Heart left ventricle (tissue), 16 donors: ENCODE measurements at regions of chr2 and their contacts with region 1.

Region 1: GRCh38 chr2:219294356-219295351 is 14.5 kb downstream of the PTPRN start:
- DNase-seq: peak; percentile 83 to 93 (median 89)
- ATAC-seq: peak; percentile 48 to 92 (median 89)
- H3K4me3 ChIP-seq: peak overlapping the region; percentile 22 to 77 (median 64)
- H3K27ac ChIP-seq: peak overlapping the region; percentile 11 to 93 (median 78)
- H3K4me1 ChIP-seq: peaks cover 0 to 24% (median 11%) of the 10 kb centered on the region in 12 donors
- H3K27me3 ChIP-seq: peaks cover 0 to 8% (median 0%) of the 10 kb centered on the region in 9 donors
- CTCF ChIP-seq: peak in 11 of 12 donors; percentile 99 to 100 (median 100)
- POLR2A ChIP-seq: peak in 1 of 2 donors; percentile 66

Region 2: GRCh38 chr2:219160186-219161017 is 134.3 kb before region 1 on chr2 and contains the start of gene NHEJ1:
- intact Hi-C with region 1: loop called (anchors 1 to 5 kb)
- DNase-seq: peak; percentile 95 to 98 (median 96)
- ATAC-seq: peak; percentile 96 to 98 (median 98)
- H3K4me3 ChIP-seq: peak within 1 kb of the TSS; percentile 42 to 88 (median 68)
- H3K27ac ChIP-seq: peak within 1 kb of the TSS; percentile 88 to 99 (median 95)
- H3K4me1 ChIP-seq: peaks cover 0 to 15% (median 10%) of the 10 kb centered on the region in 12 donors
- H3K27me3 ChIP-seq: no peaks in the 10 kb centered on the region
- CTCF ChIP-seq: peak; percentile 98 to 100 (median 99)
- POLR2A ChIP-seq: peak in 1 of 2 donors; percentile 64
- total RNA-seq, gene NHEJ1: 4.6 to 13.2 (median 8.0) TPM

Region 3: DNA sequence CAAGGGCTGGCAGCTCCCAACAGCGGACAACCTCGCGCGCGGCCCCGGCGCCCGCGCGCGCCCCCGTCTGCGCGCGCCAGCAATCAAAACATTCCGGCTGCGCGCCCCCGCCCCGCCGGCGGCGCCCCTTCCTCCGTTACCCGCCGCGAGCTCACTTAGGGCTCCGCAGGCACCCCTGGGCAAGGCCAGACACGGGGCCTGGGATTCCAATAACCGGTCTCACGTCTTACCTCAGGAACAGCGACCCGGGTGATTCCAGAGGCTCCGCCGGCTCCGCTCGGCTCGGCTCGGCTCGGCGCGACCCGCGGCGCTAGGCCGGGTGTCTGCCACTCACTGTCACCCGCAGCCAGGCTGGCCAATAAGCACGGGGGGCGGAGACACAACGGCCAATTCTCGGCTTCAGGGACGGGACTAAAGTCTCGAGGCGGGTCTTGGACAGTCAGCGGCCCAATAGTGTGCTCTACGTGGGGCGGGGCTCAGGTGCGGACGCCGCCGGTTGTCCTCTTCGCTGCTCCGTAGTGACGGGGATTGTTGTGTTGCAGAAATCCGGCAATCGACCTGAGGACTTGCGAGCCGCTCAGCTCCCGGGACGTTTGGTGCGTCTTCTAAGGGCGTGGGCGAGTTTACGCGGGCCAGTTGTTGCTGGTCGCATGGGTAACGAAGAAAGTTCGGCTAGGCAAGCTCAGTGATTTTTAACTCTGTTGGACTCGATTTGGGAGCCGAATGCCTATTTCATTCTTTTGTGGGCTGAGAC is 65.2 kb before region 1 on chr2 and contains the starts of genes ANKZF1 and ATG9A:
- intact Hi-C with region 1: loop called in 3 of 10 experiments (anchors 2 to 10 kb)
- DNase-seq: peak; percentile 98 to 100 (median 99)
- ATAC-seq: peak; percentile 99
- H3K4me3 ChIP-seq: peak within 1 kb of the TSS; percentile 80 to 92 (median 88)
- H3K27ac ChIP-seq: peak within 1 kb of the TSS; percentile 93 to 99 (median 97)
- H3K4me1 ChIP-seq: peaks cover 3 to 51% (median 26%) of the 10 kb centered on the region in 12 donors
- H3K27me3 ChIP-seq: no peaks in the 10 kb centered on the region
- CTCF ChIP-seq: no peak
- POLR2A ChIP-seq: peak in 1 of 2 donors; percentile 85
- total RNA-seq, gene ANKZF1: 14.0 to 36.8 (median 28.0) TPM
- total RNA-seq, gene ATG9A: 62.8 to 147 (median 83.5) TPM

Region 4: GRCh38 chr2:219245148-219245898 is 49.3 kb before region 1 on chr2 and contains the starts of genes GLB1L and STK16:
- intact Hi-C with region 1: loop called in 2 of 10 experiments (anchors 5 to 10 kb)
- DNase-seq: peak; percentile 94 to 97 (median 95)
- ATAC-seq: peak; percentile 85 to 95 (median 95)
- H3K4me3 ChIP-seq: peak within 1 kb of the TSS; percentile 67 to 95 (median 84)
- H3K27ac ChIP-seq: peak within 1 kb of the TSS; percentile 77 to 98 (median 93)
- H3K4me1 ChIP-seq: peaks cover 6 to 54% (median 33%) of the 10 kb centered on the region in 12 donors
- H3K27me3 ChIP-seq: no peaks in the 10 kb centered on the region
- CTCF ChIP-seq: no peak
- POLR2A ChIP-seq: peak in 1 of 2 donors; percentile 80
- total RNA-seq, gene GLB1L: 1.6 to 7.9 (median 2.5) TPM
- total RNA-seq, gene STK16: 13.8 to 26.9 (median 19.1) TPM

Region 5: DNA sequence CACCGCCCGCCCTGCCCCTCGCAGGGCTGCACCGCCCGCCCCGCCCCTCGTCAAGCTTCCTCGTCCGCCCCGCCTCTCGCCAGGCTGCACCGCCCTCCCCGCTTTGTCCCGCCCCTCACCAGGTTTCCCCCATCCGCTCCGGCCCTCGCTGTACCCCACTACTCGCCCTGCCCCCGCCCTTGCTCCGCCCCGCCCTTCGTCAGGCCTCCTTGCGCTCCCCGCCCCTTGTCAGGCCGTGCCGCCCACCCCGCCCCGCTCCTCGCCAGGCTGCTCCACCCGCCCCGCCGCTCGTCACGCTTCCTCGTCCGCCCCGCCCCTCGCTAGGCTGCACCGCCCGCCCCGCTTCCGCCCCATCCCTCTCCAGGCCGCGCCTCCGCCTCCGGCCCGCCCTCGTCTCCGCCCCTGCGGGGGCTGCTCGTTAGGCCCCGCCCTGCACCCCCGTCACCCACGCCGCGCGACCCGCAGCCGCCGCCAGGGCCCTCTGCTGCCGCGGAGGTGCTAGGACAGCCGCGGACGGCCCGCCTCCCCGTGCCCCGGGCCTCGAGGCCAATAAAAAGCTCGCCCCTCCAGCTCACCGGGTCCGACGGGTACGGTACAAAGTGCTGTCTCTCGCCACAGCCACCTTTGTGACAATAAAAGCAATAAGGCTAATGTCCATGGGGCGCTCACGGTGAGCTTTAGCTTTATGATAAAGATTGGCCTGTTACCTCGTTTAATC is 93.6 kb after region 1 on chr2:
- intact Hi-C with region 1: loop called in 2 of 10 experiments (anchors 10 kb)
- DNase-seq: peak; percentile 99 to 100 (median 99)
- ATAC-seq: peak; percentile 83 to 92 (median 88)
- H3K4me3 ChIP-seq: peak overlapping the region in 10 of 12 donors; percentile 20 to 95 (median 78)
- H3K27ac ChIP-seq: peak overlapping the region; percentile 77 to 99 (median 89)
- H3K4me1 ChIP-seq: peaks cover 0 to 19% (median 11%) of the 10 kb centered on the region in 12 donors
- H3K27me3 ChIP-seq: no peaks in the 10 kb centered on the region
- CTCF ChIP-seq: peak; percentile 40 to 87 (median 74)
- POLR2A ChIP-seq: peak in 1 of 2 donors; percentile 40